Activated B cell treated with CpG ODN at 0.5 μM for 24 hours (primary cell): ENCODE measurements at regions of chr1 and their contacts with region 1.

Region 1: DNA sequence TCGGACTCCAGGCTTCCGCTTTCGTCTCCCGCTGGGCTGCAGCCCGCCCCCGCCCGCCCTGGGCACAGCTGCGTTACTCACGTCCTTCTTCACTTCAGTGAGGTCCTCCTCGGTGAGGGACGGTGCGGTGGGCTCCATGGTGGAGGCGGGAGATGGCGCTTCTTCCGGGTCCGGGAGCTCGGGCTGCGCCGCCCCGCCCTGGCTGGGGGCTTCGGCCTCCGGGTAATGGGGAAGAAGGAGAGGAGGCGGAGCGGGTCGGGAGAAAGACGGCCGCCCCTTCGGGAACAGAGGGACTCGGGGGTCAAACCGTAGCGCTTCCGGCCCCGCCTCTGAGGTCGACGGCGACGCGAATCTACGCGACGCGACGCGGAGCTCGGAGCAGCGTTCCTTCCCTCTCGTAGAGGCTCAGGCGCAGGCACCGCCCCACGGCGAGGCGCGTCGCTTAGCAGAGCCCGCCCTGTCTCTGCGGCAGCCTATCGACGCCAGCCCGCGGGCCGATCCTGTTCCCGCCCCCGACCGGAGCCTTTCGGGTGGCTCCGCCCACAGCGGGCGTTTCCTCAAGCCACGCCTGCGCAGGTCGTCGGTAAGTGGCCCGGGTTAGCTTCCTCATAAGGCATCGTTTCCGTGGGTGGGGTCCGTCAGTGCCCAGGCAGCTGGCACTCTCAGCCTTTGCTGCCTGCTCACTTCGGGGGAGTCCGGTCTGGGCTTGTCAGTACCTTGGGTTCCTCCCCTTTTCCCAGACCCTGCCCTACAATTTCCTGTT is at the start of gene BCL10:
- DNase-seq: peak; percentile 98
- ATAC-seq: peak; percentile 94
- H3K4me3 Mint-ChIP-seq: peak within 1 kb of the TSS; percentile 91
- H3K27ac Mint-ChIP-seq: peak within 1 kb of the TSS; percentile 94
- H3K4me1 Mint-ChIP-seq: peaks cover 60% of the 10 kb centered on the region
- H3K27me3 Mint-ChIP-seq: no peaks in the 10 kb centered on the region
- CTCF ChIP-seq: no peak
- total RNA-seq, gene BCL10: 52.5 and 53.3 TPM in 2 replicates

Region 2: GRCh38 chr1:84077476-84078107 is 1198.8 kb before region 1 on chr1:
- CTCF ChIA-PET with region 1: no interaction called
- POLR2A ChIA-PET with region 1: no interaction called
- intact Hi-C with region 1: loop called (anchors 5 kb)
- DNase-seq: peak; percentile 80
- ATAC-seq: peak; percentile 90
- H3K4me3 Mint-ChIP-seq: peak overlapping the region; percentile 91
- H3K27ac Mint-ChIP-seq: peak overlapping the region; percentile 75
- H3K4me1 Mint-ChIP-seq: peaks cover 11% of the 10 kb centered on the region
- H3K27me3 Mint-ChIP-seq: no peaks in the 10 kb centered on the region
- CTCF ChIP-seq: no peak

Region 3: DNA sequence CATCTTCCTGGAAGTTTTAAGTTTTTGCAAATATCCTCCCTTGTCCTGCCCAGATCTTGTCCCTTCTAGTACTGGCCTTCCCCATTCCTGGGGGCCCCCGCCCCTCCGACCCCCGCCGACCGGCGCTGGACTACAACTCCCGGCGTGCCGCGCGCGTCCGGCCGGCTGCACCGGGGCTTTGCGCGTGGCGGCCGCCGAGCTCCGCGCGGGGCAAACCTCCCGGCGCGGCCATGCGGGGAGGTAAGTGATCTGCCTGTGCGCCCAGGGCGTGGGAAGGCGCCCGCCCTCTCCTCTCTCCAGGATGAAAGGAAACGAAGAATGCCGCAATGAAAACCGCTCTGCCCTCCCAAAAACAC is 978.1 kb before region 1 on chr1:
- CTCF ChIA-PET with region 1: no interaction called
- POLR2A ChIA-PET with region 1: interaction called, 4 read pairs
- intact Hi-C with region 1: loop called (anchors 10 kb)
- DNase-seq: peak; percentile 58
- ATAC-seq: peak; percentile 91
- H3K4me3 Mint-ChIP-seq: peak overlapping the region; percentile 90
- H3K27ac Mint-ChIP-seq: peak overlapping the region; percentile 74
- H3K4me1 Mint-ChIP-seq: peaks cover 34% of the 10 kb centered on the region
- H3K27me3 Mint-ChIP-seq: peaks cover 8% of the 10 kb centered on the region
- CTCF ChIP-seq: no peak

Region 4: GRCh38 chr1:84690397-84691121 is 585.8 kb before region 1 on chr1 and contains the start of gene SSX2IP:
- CTCF ChIA-PET with region 1: no interaction called
- POLR2A ChIA-PET with region 1: no interaction called
- intact Hi-C with region 1: loop called (anchors 2 kb)
- DNase-seq: peak; percentile 100
- ATAC-seq: peak; percentile 86
- H3K4me3 Mint-ChIP-seq: peak within 1 kb of the TSS; percentile 91
- H3K27ac Mint-ChIP-seq: peak within 1 kb of the TSS; percentile 89
- H3K4me1 Mint-ChIP-seq: peaks cover 32% of the 10 kb centered on the region
- H3K27me3 Mint-ChIP-seq: no peaks in the 10 kb centered on the region
- CTCF ChIP-seq: no peak
- total RNA-seq, gene SSX2IP: 4.5 and 5.4 TPM in 2 replicates

Region 5: GRCh38 chr1:85061711-85062424 is 214.5 kb before region 1 on chr1:
- CTCF ChIA-PET with region 1: no interaction called
- POLR2A ChIA-PET with region 1: interaction called, 4 read pairs
- intact Hi-C with region 1: loop called (anchors 1 kb)
- DNase-seq: peak; percentile 56
- ATAC-seq: peak; percentile 98
- H3K4me3 Mint-ChIP-seq: peak overlapping the region; percentile 92
- H3K27ac Mint-ChIP-seq: peak overlapping the region; percentile 83
- H3K4me1 Mint-ChIP-seq: peaks cover 27% of the 10 kb centered on the region
- H3K27me3 Mint-ChIP-seq: peaks cover 10% of the 10 kb centered on the region
- CTCF ChIP-seq: no peak

Region 6: DNA sequence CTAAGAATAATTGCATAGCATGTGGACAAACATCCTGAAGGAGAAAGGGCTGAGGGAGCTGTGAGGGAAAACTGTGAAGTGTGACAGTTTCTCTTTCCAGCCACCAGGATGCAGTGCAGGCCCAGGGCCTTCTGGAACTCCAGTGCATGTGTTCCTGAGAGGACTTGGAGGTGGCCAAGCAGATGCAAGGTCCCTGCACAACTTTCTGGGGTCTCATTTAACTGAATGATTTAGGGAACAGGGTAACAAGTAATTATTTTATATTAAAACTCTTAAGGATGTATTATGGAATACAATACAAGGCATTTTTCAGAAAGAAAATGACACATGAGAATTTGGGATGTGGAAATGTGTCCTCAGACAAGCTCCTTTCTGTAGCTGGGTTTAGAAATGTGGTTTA is 166.9 kb before region 1 on chr1:
- CTCF ChIA-PET with region 1: no interaction called
- POLR2A ChIA-PET with region 1: no interaction called
- intact Hi-C with region 1: no loop called
- DNase-seq: no peak
- ATAC-seq: no peak
- H3K4me3 Mint-ChIP-seq: no peak overlapping the region
- H3K27ac Mint-ChIP-seq: no peak overlapping the region
- H3K4me1 Mint-ChIP-seq: no peaks in the 10 kb centered on the region
- H3K27me3 Mint-ChIP-seq: no peaks in the 10 kb centered on the region
- CTCF ChIP-seq: no peak

Region 7: GRCh38 chr1:85153149-85153891 is 123.1 kb before region 1 on chr1:
- CTCF ChIA-PET with region 1: no interaction called
- POLR2A ChIA-PET with region 1: no interaction called
- intact Hi-C with region 1: no loop called
- DNase-seq: no peak
- ATAC-seq: no peak
- H3K4me3 Mint-ChIP-seq: no peak overlapping the region
- H3K27ac Mint-ChIP-seq: no peak overlapping the region
- H3K4me1 Mint-ChIP-seq: no peaks in the 10 kb centered on the region
- H3K27me3 Mint-ChIP-seq: peaks cover 2% of the 10 kb centered on the region
- CTCF ChIP-seq: no peak

Region 8: GRCh38 chr1:85297855-85298629 is 21.6 kb after region 1 on chr1:
- CTCF ChIA-PET with region 1: interaction called, 4 read pairs
- POLR2A ChIA-PET with region 1: interaction called, 36 read pairs
- intact Hi-C with region 1: loop called (anchors 1 kb)
- DNase-seq: peak; percentile 26
- ATAC-seq: peak; percentile 90
- H3K4me3 Mint-ChIP-seq: peak overlapping the region; percentile 51
- H3K27ac Mint-ChIP-seq: peak overlapping the region; percentile 76
- H3K4me1 Mint-ChIP-seq: peaks cover 29% of the 10 kb centered on the region
- H3K27me3 Mint-ChIP-seq: no peaks in the 10 kb centered on the region
- CTCF ChIP-seq: no peak